OCI-LY7 (cell line): ENCODE measurements at regions of chr2 and their contacts with region 1.

Region 1: GRCh38 chr2:17851731-17852585 is 26.5 kb upstream of the KCNS3 start:
- DNase-seq: peak; percentile 61
- H3K4me3 ChIP-seq: no peak overlapping the region
- H3K27ac ChIP-seq: no peak overlapping the region
- H3K4me1 ChIP-seq: no peaks in the 10 kb centered on the region
- CTCF ChIP-seq: peak; percentile 88

Region 2: DNA sequence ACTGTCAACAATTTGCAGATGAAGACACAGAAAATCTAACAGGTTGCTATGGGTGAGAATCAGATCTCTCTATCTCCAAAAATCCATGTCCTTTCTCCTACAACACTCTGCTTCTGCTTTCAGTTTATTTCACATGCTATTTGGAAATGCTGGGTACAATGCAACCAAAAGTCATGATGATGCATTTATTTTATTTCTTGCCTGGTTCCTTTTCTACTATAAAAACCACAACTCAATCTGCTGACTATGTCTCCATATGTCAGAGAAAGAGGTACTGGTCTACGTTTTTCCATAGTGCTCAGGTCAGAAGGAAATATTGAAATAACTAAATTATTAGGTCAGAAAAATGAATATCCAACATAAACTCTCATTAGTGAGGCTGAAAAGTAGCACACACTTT is 354.2 kb before region 1 on chr2:
- CTCF ChIA-PET with region 1: no interaction called
- POLR2A ChIA-PET with region 1: no interaction called
- intact Hi-C with region 1: no loop called
- DNase-seq: no peak
- H3K4me3 ChIP-seq: no peak overlapping the region
- H3K27ac ChIP-seq: no peak overlapping the region
- H3K4me1 ChIP-seq: no peaks in the 10 kb centered on the region
- CTCF ChIP-seq: no peak

Region 3: DNA sequence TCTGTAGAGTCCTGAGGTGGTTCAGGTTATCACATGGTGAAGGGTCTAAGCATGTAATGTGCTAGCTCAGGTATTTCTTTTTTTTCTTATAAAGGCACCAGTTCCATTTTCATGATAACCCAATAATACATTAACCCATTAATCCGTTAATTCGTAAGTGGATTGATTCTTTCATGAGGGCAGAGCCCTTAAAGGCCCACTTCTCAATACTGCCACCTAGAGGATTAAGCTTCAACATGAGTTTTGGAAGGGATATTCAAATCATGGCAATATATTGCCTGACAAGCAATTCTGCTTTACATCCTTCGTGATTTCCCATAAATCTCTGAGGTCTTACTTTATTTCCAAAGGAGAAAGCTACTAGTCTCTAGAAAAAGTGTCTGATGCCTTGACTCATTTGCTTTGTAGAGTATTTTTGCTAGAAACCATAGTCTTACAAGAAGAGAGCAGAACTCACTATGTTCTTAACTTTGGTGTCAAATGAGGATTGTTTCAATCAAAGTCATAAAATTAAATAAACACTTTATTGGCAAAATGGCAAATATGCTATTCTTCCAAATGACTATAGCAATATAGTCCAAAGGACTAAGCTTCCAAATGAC is 297.8 kb after region 1 on chr2:
- CTCF ChIA-PET with region 1: no interaction called
- POLR2A ChIA-PET with region 1: no interaction called
- intact Hi-C with region 1: loop called (anchors 1 kb)
- DNase-seq: peak; percentile 64
- H3K4me3 ChIP-seq: no peak overlapping the region
- H3K27ac ChIP-seq: no peak overlapping the region
- H3K4me1 ChIP-seq: no peaks in the 10 kb centered on the region
- CTCF ChIP-seq: peak; percentile 90

Region 4: DNA sequence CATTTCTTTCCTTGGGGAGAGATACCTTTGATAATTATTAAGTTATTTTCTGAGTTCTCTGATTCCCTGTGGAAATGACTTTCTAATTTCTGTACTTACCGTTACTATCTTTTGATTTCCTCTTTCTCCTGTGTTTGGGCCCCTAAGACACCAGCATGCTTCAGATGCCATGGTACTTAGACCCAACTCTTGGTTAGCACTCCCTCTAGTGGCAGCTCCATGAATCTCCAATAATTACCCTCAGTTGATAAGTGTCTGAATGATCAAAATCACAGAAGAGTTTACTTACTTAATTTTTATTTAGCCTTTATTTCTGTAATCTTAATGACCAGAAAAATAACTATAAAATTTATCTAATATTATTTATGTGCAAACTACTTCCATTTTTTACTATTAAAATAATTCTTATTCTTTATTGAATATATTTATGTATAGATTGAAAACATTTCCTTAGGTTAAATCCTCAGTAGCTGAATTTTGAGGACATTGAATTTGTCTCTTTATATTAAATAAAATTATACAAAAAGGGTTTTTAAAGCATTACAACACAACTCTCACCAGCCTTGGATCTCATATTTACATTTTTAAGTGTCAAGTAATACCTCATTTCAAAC is 326.9 kb after region 1 on chr2:
- CTCF ChIA-PET with region 1: no interaction called
- POLR2A ChIA-PET with region 1: no interaction called
- intact Hi-C with region 1: loop called (anchors 5 kb)
- DNase-seq: peak; percentile 68
- H3K4me3 ChIP-seq: no peak overlapping the region
- H3K27ac ChIP-seq: no peak overlapping the region
- H3K4me1 ChIP-seq: no peaks in the 10 kb centered on the region
- CTCF ChIP-seq: peak; percentile 95

Region 5: DNA sequence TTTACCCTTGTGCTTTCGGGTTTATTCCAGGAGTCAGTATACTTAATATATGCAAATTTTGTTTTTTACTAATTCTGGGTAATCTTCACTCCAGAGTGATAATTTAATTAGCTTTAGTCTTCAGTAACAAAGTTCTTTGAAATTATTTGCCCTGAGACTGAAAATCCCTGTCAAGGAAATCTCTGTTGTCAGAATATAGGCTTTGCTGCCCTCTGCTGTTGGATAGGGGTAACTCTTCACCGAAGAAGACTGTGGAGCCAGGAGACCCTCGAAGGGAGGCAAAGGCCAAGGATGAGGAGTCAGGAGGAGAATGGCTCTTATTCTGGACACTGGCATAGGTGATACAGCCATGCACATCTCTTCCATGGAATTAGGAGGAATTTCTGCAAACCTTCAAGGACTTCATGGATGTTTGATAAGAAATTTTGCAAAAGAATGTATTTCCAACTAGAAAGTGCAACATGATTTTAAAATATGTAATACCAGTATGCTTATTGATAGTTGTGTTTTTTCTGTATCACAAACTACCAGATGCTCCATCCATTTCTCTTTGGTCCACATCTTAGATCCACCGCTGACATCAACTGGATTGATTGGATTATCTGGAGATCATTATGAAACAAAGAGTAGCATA is 526.2 kb after region 1 on chr2:
- CTCF ChIA-PET with region 1: no interaction called
- POLR2A ChIA-PET with region 1: no interaction called
- intact Hi-C with region 1: loop called (anchors 2 kb)
- DNase-seq: peak; percentile 52
- H3K4me3 ChIP-seq: no peak overlapping the region
- H3K27ac ChIP-seq: no peak overlapping the region
- H3K4me1 ChIP-seq: no peaks in the 10 kb centered on the region
- CTCF ChIP-seq: peak; percentile 94